Tibial artery (tissue), 4 donors: ENCODE measurements at regions of chr20 and their contacts with region 1.

Region 1: DNA sequence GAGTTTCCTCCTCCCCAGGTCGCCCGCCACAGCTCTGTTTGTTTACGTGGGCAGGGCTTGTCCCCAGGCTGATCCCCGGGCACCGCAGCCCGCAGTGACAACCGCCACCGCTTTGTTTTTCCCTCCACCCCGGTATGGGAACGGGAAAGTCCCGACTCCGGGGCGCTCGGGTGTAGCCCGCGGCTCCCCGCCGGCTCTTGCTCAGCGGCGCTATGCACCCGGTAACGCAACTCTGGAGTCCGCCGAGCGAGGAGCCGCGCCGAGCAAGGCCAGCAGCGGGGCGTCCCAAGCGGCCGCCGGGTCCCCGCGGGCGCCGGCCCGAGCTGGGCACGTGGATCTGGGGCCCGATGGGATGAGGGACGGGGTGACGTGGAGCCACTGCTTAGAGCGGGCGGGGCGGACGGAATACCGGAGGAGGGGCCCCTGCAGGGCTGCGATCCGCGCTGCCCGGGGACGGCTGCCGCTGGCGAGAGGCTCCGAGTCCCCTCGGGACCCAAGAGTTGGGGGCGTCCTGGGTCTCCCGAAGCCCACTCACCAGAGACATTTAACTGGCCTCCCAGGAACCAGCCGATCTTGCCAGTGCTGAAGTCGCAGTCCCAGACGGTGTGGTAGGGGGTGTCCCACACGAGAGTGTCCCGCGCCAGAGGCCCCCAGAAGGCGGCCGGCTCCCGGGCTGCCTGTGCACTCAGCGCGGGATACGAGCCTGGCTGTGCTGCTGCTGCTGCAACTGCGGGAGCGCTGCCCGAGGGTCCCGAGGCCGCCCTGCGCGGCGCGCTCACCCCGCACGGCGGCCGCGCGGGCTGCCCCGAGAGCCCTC is 497 bp downstream of the ACSS1 start:
- DNase-seq: peak; percentile 80 to 91
- H3K4me3 ChIP-seq: peak overlapping the region; percentile 67 to 92
- H3K27ac ChIP-seq: peak overlapping the region; percentile 93 to 96
- H3K4me1 ChIP-seq: peaks cover 0 to 61% (median 49%) of the 10 kb centered on the region in 4 donors
- H3K27me3 ChIP-seq: no peaks in the 10 kb centered on the region
- CTCF ChIP-seq: peak in 1 of 2 experiments; percentile 4

Region 2: DNA sequence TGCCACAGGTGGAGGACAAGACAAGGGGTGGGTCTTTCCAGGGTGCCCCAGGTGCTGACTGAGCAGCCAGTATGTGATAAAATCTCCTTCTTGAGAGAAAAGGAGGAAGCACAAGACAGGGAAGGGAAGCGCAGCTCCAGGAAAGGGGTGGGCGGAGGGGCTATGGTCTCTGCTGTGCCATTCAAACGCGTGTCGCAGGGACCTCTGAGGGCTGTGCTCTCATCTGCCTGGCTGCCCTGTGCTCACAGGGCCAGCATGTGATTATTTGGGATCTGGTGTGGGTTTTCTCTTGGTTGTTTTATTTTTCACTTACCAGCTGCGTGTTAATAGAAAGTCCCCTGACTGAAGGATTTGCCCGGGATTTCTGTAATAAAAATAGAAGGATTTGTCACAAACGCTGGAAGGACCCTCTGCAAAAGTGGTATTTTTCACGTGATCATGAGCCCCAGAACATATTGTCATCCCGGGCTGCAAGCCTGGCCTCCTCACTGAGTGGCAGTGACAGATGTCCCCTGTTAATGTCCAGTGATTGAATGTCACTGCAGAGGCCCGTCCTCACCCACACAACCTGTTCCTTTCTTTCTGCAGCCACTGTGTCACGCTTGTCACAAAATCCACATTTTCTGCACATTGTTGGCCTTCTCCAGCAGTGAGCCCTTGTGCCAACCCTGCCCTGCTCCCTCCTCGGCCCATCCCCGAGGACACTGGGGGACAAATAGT is 59.5 kb after region 1 on chr20:
- intact Hi-C with region 1: no loop called
- DNase-seq: no peak
- H3K4me3 ChIP-seq: no peak overlapping the region
- H3K27ac ChIP-seq: no peak overlapping the region
- H3K4me1 ChIP-seq: peaks cover 0 to 24% (median 13%) of the 10 kb centered on the region in 4 donors
- H3K27me3 ChIP-seq: no peaks in the 10 kb centered on the region
- CTCF ChIP-seq: no peak

Region 3: GRCh38 chr20:25237610-25238318 is 180.3 kb after region 1 on chr20:
- intact Hi-C with region 1: loop called (anchors 10 kb)
- DNase-seq: peak; percentile 89 to 92
- H3K4me3 ChIP-seq: no peak overlapping the region
- H3K27ac ChIP-seq: peak overlapping the region; percentile 74 to 80
- H3K4me1 ChIP-seq: peaks cover 0 to 65% (median 61%) of the 10 kb centered on the region in 4 donors
- H3K27me3 ChIP-seq: no peaks in the 10 kb centered on the region
- CTCF ChIP-seq: no peak

Region 4: DNA sequence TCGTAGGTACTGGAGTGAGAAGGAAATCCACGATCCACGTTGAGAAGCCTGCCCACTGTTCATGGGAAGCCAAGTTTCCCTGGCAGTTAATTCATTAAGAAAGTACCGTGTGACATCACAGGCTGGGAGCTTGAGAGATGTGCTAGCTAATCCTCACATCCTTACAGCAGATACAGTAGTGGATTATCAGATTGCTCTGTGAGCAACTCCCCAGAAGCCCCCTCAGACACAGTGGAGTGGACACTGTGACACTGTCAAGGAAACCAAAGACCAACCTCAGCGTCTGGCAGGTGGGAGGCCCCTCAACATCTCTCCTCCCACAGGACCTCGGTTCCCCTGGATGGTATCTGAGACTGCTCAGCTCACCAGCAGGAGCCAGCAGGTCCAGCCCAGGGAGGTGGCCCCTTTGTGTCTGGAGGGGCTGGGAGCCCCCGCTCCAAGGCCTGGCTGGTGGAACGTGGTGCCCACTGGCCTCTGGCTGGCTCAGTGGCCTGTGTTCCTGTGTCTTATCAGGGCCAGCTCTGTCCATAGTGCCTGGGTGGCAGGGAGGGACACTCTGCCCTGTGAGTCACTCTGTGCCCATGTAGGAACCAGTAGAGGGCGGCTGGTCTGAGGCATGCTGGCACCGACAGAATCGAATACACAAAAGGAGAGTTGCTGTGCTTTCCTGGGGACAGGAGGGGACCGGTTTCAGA is 197.7 kb after region 1 on chr20:
- intact Hi-C with region 1: loop called (anchors 5 kb)
- DNase-seq: peak; percentile 41 to 86
- H3K4me3 ChIP-seq: no peak overlapping the region
- H3K27ac ChIP-seq: peak overlapping the region; percentile 53 to 66
- H3K4me1 ChIP-seq: peaks cover 4 to 83% (median 64%) of the 10 kb centered on the region in 4 donors
- H3K27me3 ChIP-seq: no peaks in the 10 kb centered on the region
- CTCF ChIP-seq: peak in 1 of 2 experiments; percentile 17